Gastrocnemius medialis (tissue), 4 donors: ENCODE measurements at regions of chr12 and their contacts with region 1.

Region 1: DNA sequence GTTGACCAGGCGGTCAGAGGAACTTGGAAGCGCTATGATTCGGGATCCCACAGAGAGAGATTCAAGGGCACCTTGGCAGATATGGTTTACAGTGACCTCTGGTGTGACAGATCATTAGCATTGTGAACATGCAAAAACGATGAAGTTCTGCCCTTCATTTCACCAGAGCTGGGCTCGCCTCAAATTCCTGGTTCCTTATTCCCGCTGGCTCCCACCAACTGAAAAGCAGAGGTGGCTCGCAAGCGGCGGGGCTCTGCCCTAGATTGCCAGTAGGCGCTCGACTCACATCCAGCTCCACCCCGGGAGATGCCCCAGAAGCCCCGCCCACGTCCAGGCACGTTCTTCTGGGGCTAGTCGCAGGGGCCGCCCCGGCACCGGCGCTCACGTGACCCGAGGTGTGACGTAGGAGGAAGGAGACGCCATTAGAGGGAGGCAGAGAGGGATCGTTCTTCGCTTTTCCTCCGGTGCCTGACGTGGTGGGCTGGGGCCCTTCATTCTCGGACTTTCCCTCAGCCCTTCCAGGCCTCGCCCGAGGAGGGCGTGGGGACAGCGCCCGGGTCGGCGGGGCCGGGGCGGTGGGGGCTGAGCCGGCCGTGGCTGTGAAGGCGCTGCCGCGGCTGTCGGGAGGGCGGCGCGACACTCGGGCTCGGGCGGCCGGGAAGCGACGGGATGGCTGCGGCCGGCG is at the start of gene RAB21:
- DNase-seq: peak; percentile 98
- ATAC-seq: peak; percentile 82 to 85
- H3K4me3 ChIP-seq: peak within 1 kb of the TSS; percentile 78 to 89 (median 84)
- H3K27ac ChIP-seq: peak within 1 kb of the TSS; percentile 93 to 97 (median 96)
- H3K4me1 ChIP-seq: peaks cover 20 to 21% of the 10 kb centered on the region in 2 donors
- H3K27me3 ChIP-seq: no peaks in the 10 kb centered on the region
- CTCF ChIP-seq: peak; percentile 31 to 52 (median 42)
- POLR2A ChIP-seq: peak; percentile 94 to 95
- total RNA-seq, gene RAB21: 17.4 to 75.9 (median 45.7) TPM

Region 2: DNA sequence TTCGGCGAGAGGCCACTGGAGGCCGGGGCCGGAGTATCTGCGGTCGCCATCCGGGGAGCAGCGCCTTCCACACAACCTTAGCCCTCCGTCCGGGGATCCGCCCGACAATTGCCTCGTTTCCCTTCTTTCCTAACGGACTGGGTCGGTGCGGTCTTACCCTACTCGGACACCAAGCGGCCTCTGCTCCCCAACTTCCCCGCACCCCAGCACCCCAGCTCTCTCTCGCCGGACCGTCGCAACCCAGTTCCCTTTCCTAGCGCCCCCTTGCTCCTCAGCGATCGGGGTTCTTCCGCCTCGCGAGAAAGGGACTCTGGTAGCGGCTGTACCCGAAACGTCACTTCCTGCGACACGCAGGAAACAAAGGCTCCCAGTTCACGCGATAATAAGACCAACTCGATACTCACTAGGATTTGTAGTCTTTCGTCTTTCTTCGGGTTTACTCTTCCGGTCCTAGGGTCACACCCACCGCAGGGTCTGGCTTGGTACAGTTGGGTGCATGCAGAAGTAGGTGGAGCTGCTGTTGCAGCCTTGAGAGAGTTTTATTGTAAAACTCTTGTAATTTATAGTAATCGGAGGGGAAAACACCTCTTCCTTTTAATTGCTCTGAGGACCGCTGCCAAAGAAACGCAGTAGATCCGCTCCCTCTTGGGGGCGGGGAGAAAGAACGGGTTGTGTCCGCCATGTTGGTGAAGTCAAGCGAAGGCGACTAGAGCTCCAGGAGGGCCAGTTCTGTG is 90.9 kb before region 1 on chr12 and contains the start of gene ZFC3H1:
- in situ Hi-C with region 1: loop called in 2 of 4 experiments (anchors 10 kb)
- intact Hi-C with region 1: loop called (anchors 1 kb)
- DNase-seq: peak; percentile 95 to 96
- ATAC-seq: peak; percentile 97 to 98
- H3K4me3 ChIP-seq: peak within 1 kb of the TSS; percentile 82 to 99 (median 96)
- H3K27ac ChIP-seq: peak within 1 kb of the TSS; percentile 93 to 97 (median 96)
- H3K4me1 ChIP-seq: peaks cover 27 to 31% of the 10 kb centered on the region in 2 donors
- H3K27me3 ChIP-seq: no peaks in the 10 kb centered on the region
- CTCF ChIP-seq: peak in 2 of 5 experiments; percentile 17 to 38
- POLR2A ChIP-seq: peak; percentile 96
- total RNA-seq, gene ZFC3H1: 6.5 to 26.4 (median 9.1) TPM

Region 3: GRCh38 chr12:71694099-71694820 is 60.3 kb before region 1 on chr12:
- in situ Hi-C with region 1: loop called in 2 of 4 experiments (anchors 5 to 10 kb)
- intact Hi-C with region 1: no loop called
- DNase-seq: no peak
- ATAC-seq: peak; percentile 63 to 70
- H3K4me3 ChIP-seq: no peak overlapping the region
- H3K27ac ChIP-seq: peak overlapping the region; percentile 47 to 72 (median 60)
- H3K4me1 ChIP-seq: peaks cover 38 to 40% of the 10 kb centered on the region in 2 donors
- H3K27me3 ChIP-seq: no peaks in the 10 kb centered on the region
- CTCF ChIP-seq: no peak
- POLR2A ChIP-seq: no peak

Region 4: GRCh38 chr12:71731751-71732712 is 22.6 kb before region 1 on chr12:
- in situ Hi-C with region 1: no loop called
- intact Hi-C with region 1: no loop called
- DNase-seq: no peak
- ATAC-seq: no peak
- H3K4me3 ChIP-seq: no peak overlapping the region
- H3K27ac ChIP-seq: no peak overlapping the region
- H3K4me1 ChIP-seq: no peaks in the 10 kb centered on the region
- H3K27me3 ChIP-seq: no peaks in the 10 kb centered on the region
- CTCF ChIP-seq: no peak
- POLR2A ChIP-seq: no peak

Region 5: GRCh38 chr12:71840231-71840847 is 85.7 kb after region 1 on chr12:
- in situ Hi-C with region 1: loop called in 1 of 4 experiments (anchors 10 kb)
- intact Hi-C with region 1: loop called (anchors 2 kb)
- DNase-seq: no peak
- ATAC-seq: peak; percentile 49 to 80
- H3K4me3 ChIP-seq: peak overlapping the region; percentile 61 to 84 (median 78)
- H3K27ac ChIP-seq: peak overlapping the region; percentile 91 to 98 (median 97)
- H3K4me1 ChIP-seq: peaks cover 51% of the 10 kb centered on the region in 2 donors
- H3K27me3 ChIP-seq: no peaks in the 10 kb centered on the region
- CTCF ChIP-seq: no peak
- POLR2A ChIP-seq: no peak

Region 6: GRCh38 chr12:71846322-71846940 is 91.8 kb after region 1 on chr12:
- in situ Hi-C with region 1: loop called in 1 of 4 experiments (anchors 10 kb)
- intact Hi-C with region 1: loop called (anchors 1 kb)
- DNase-seq: no peak
- ATAC-seq: no peak
- H3K4me3 ChIP-seq: peak overlapping the region in 1 of 4 donors; percentile 5
- H3K27ac ChIP-seq: peak overlapping the region; percentile 84 to 95 (median 90)
- H3K4me1 ChIP-seq: peaks cover 86 to 94% of the 10 kb centered on the region in 2 donors
- H3K27me3 ChIP-seq: no peaks in the 10 kb centered on the region
- CTCF ChIP-seq: peak; percentile 11 to 78 (median 53)
- POLR2A ChIP-seq: no peak

Region 7: GRCh38 chr12:72790273-72790672 is 1035.7 kb after region 1 on chr12:
- in situ Hi-C with region 1: no loop called
- intact Hi-C with region 1: no loop called
- DNase-seq: no peak
- ATAC-seq: no peak
- H3K4me3 ChIP-seq: no peak overlapping the region
- H3K27ac ChIP-seq: no peak overlapping the region
- H3K4me1 ChIP-seq: no peaks in the 10 kb centered on the region
- H3K27me3 ChIP-seq: no peaks in the 10 kb centered on the region
- CTCF ChIP-seq: no peak
- POLR2A ChIP-seq: no peak